ENCODE measurements at regions of chr6 and their contacts with region 1.

Region 1: DNA sequence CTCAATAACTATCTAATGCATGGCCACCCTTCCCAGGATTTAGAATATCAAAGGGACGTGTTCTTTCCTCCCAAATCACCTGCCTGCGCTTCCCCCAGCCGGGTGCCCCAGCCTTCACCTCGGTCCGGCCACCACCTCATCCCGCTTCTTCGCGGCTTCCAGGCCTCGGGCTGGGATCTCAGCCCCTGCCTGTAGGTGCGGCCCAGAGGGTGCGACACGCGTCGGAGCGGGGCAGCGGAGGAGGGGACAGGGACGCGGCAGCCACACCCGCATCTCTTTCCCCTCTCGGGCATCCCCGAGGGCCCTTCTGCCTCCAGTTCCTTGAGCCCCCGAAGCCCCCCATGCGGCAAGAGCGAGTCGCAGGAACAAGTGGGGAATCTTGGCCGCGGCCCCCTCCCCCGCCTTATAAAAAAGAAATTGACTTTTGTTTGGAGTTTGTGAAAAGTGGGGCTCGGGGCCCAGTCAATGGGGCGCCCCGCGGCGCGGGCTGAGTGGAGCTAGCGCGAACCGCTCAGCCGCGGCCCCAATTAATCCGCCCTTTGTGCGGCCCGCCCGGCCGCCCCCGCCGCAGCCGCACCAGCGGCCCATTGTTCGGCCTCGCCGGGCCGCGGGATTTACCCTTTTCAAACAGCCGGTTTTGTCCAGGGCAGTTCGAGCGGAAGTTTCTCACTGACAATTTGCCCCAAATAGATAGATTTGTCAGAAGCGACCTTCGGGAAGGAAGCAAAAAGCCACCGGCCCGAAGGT is 8.4 kb upstream of the NR2E1 start:
- DNase-seq: peak; percentile 60
- ATAC-seq: peak; percentile 28
- H3K4me3 ChIP-seq: peak overlapping the region in 3 of 5 experiments; percentile 29 to 47 (median 37)
- H3K4me3 Mint-ChIP-seq: peak overlapping the region; percentile 73
- H3K27ac ChIP-seq: no peak overlapping the region
- H3K27ac Mint-ChIP-seq: no peak overlapping the region
- H3K4me1 ChIP-seq: peaks cover 18 to 23% of the 10 kb centered on the region in 2 donors
- H3K4me1 Mint-ChIP-seq: peaks cover 16% of the 10 kb centered on the region
- H3K27me3 ChIP-seq: peaks cover 0 to 77% (median 70%) of the 10 kb centered on the region in 4 experiments
- H3K27me3 Mint-ChIP-seq: peaks cover 82% of the 10 kb centered on the region
- CTCF ChIP-seq: no peak

Region 2: DNA sequence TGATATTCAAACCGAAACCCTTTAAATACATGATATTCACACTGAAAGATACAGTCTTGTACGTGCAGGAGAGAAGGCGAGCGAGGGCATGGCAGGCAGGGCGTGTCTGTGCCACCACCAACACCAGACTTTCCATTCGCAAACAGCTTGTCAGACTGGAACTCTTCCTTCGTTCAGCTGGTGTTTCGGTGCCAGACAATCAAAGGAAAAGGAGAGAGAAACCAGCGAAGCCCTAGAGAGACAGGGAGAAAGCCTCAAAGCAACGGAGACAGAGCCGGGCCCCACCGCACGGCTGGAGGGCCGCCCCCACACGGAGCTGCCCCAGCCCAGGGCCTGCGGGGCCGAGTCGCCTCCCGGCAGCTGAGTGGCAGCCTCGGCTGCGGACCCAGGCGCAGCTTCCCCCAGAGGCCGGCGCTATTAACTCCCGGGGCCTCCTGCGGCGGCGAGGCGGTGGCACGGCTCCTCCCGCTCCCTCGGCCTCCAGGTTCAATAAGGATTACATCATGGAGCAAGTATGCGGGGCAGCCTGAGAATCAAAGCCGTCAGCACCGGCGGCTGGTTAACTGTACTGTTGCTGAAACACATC is 23.7 kb before region 1 on chr6:
- CTCF ChIA-PET with region 1: interaction called, 6 read pairs
- POLR2A ChIA-PET with region 1: no interaction called
- intact Hi-C with region 1: loop called (anchors 2 kb)
- DNase-seq: peak; percentile 60
- ATAC-seq: peak; percentile 74
- H3K4me3 ChIP-seq: peak overlapping the region; percentile 7 to 64 (median 44)
- H3K4me3 Mint-ChIP-seq: peak overlapping the region; percentile 88
- H3K27ac ChIP-seq: no peak overlapping the region
- H3K27ac Mint-ChIP-seq: no peak overlapping the region
- H3K4me1 ChIP-seq: peaks cover 21 to 22% of the 10 kb centered on the region in 2 donors
- H3K4me1 Mint-ChIP-seq: peaks cover 16% of the 10 kb centered on the region
- H3K27me3 ChIP-seq: peaks cover 0 to 61% (median 46%) of the 10 kb centered on the region in 4 experiments
- H3K27me3 Mint-ChIP-seq: peaks cover 73% of the 10 kb centered on the region
- CTCF ChIP-seq: no peak

Region 3: DNA sequence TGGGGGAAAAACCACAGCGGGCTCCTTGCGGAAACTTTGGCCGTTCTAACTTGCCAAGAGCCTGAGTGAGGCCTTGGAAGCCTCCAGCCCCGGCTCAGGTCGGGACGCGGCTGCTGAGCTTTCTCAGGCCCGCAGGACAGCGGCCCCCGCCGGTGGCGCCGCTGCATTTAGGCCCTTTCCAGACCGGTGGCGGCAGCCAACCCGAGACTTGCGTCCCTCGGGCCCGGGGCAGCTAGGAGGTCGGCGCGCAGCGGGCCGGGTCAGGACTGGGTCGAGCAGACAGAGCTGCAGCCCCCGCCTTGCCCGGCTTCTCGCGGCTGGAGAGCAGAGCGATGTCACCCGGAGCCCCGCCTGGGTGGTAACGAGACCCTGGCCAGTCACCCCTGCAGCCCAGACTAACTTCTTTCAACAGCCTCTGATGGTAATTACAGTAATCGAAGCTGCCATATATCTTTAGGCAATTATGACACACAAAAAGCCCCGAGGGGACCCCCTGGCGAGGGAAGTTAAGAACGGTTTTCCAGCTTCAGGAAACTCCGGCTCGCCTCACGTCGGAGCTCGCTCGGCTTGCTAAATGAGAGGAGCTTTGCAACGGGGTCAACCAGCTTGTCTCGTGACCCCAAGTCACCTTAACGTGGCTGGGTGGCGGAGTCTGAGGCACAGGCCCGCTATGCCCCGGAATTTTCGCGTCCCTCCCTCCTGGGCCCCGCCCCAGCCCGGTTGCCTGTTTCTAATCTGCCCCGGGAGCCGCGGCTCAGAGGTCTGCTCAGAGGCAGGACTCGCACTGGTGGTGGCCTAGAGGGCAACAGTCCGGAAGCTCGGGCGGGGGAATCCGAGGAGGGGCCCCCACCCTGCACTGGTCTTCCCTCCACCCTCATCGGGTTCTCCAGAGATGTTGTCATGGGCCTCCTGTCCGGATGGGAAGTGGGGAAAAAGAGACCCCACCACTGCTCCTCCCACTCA is 11.4 kb after region 1 on chr6:
- CTCF ChIA-PET with region 1: interaction called, 3 read pairs
- POLR2A ChIA-PET with region 1: interaction called, 4 read pairs
- intact Hi-C with region 1: loop called (anchors 2 kb)
- DNase-seq: peak; percentile 75
- ATAC-seq: peak; percentile 65
- H3K4me3 ChIP-seq: peak overlapping the region in 4 of 5 experiments; percentile 22 to 59 (median 40)
- H3K4me3 Mint-ChIP-seq: peak overlapping the region; percentile 79
- H3K27ac ChIP-seq: no peak overlapping the region
- H3K27ac Mint-ChIP-seq: no peak overlapping the region
- H3K4me1 ChIP-seq: peaks cover 70 to 80% of the 10 kb centered on the region in 2 donors
- H3K4me1 Mint-ChIP-seq: peaks cover 54% of the 10 kb centered on the region
- H3K27me3 ChIP-seq: peaks cover 3 to 95% (median 84%) of the 10 kb centered on the region in 4 experiments
- H3K27me3 Mint-ChIP-seq: peaks cover 70% of the 10 kb centered on the region
- CTCF ChIP-seq: peak; percentile 23

Region 4: DNA sequence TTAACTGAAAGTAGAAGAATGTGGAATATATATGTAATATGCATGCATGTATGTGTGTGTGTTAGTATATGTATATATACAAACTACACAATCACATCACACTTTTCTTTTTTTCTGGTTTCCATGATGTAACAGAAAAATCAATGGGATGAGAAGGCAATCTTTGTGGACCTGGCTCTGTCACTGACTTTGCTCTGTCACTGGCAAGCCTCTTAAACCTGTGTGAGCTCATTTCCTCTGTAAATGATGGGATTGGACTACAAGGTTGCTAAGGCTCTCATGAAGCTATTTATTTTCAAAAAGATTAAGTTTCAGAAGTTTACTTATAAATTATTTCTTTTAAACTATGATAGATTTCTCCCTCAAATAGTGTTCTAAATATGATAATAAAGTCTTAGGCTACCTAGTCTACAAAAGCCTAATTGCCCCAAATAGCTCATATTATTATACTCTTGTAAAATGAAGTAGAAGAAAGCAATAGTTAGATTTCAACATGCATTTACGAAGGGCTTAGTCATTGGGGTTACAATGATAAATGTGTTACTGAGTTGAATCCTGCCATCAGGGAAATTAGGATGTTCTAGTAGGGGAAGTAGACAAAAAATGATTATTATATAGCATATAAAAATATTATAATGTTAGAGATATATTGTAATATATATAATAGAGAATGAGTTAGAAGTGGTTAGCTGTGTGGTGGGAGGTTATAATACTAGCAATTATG is 266.7 kb after region 1 on chr6:
- CTCF ChIA-PET with region 1: no interaction called
- POLR2A ChIA-PET with region 1: no interaction called
- intact Hi-C with region 1: no loop called
- DNase-seq: no peak
- ATAC-seq: no peak
- H3K4me3 ChIP-seq: no peak overlapping the region
- H3K4me3 Mint-ChIP-seq: no peak overlapping the region
- H3K27ac ChIP-seq: no peak overlapping the region
- H3K27ac Mint-ChIP-seq: no peak overlapping the region
- H3K4me1 ChIP-seq: no peaks in the 10 kb centered on the region
- H3K4me1 Mint-ChIP-seq: no peaks in the 10 kb centered on the region
- H3K27me3 ChIP-seq: no peaks in the 10 kb centered on the region
- H3K27me3 Mint-ChIP-seq: no peaks in the 10 kb centered on the region
- CTCF ChIP-seq: no peak

Measured in B cell (primary cell).